Aorta (tissue), 5 donors: ENCODE measurements at regions of chr9 and their contacts with region 1.

Region 1: DNA sequence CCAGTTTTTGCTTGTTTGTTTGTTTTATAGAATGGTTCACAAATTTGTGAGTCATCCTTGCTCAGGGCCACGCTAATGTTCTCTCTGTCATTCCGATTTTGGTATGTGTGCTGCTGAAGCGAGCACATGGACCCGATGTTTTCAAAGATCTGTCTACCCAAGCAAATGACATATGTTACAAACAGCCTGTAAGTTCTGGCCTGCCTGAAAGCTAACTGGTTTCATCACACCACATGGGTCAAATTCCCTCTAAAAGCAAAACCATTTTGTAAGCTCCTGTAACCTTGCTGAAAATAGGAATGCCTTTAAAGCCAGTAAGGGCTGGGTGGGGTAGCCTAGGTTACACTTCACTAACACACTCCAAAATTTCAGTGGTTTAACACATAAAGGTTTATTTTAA is 25.4 kb downstream of the DMRT3 start:
- DNase-seq: no peak
- ATAC-seq: no peak
- H3K4me3 ChIP-seq: no peak overlapping the region
- H3K27ac ChIP-seq: no peak overlapping the region
- H3K4me1 ChIP-seq: no peaks in the 10 kb centered on the region
- H3K27me3 ChIP-seq: no peaks in the 10 kb centered on the region

Region 2: GRCh38 chr9:893843-894420 is 107.9 kb before region 1 on chr9:
- intact Hi-C with region 1: loop called (anchors 2 to 5 kb)
- DNase-seq: peak in 1 of 2 donors; percentile 52
- ATAC-seq: peak; percentile 66
- H3K4me3 ChIP-seq: no peak overlapping the region
- H3K27ac ChIP-seq: no peak overlapping the region
- H3K4me1 ChIP-seq: no peaks in the 10 kb centered on the region
- H3K27me3 ChIP-seq: no peaks in the 10 kb centered on the region